Mammary epithelial cell (primary cell): ENCODE measurements at regions of chr14 and their contacts with region 1.

Region 1: GRCh38 chr14:93332853-93333630 is at the start of gene BTBD7:
- DNase-seq: peak; percentile 94
- H3K4me3 ChIP-seq: peak within 1 kb of the TSS; percentile 77 to 80 (median 78)
- H3K27ac ChIP-seq: peak within 1 kb of the TSS; percentile 91
- H3K4me1 ChIP-seq: peaks cover 15% of the 10 kb centered on the region
- H3K27me3 ChIP-seq: no peaks in the 10 kb centered on the region
- CTCF ChIP-seq: peak; percentile 15 to 31
- total RNA-seq, gene BTBD7: 41.0 to 56.6 TPM

Region 2: DNA sequence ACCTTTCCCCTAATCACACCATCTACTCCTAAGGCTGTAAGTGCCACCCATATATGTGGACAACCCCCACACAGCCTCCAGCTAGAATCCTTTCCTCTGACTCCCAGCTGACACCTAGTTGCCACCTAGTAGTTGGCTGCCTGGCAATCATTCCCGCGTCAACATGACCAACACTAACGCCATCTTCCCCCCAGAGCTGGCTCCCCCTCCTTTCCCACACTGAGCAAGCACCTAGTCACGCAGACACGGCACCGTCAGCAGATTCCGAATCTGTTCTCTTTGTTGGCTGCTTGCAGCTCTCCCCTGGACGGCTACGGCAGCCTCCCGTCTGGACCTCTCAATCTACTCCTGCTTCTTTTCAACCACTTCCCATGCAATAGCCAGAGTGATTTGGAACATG is 98.2 kb before region 1 on chr14:
- CTCF ChIA-PET with region 1: no interaction called
- dilution Hi-C with region 1: no loop called
- in situ Hi-C with region 1: no loop called
- intact Hi-C with region 1: loop called (anchors 2 kb)
- DNase-seq: peak; percentile 79
- H3K4me3 ChIP-seq: no peak overlapping the region
- H3K27ac ChIP-seq: no peak overlapping the region
- H3K4me1 ChIP-seq: peaks cover 4% of the 10 kb centered on the region
- H3K27me3 ChIP-seq: no peaks in the 10 kb centered on the region
- CTCF ChIP-seq: no peak

Region 3: GRCh38 chr14:93263416-93263815 is 69.6 kb before region 1 on chr14:
- CTCF ChIA-PET with region 1: no interaction called
- dilution Hi-C with region 1: no loop called
- in situ Hi-C with region 1: no loop called
- intact Hi-C with region 1: loop called (anchors 2 kb)
- DNase-seq: peak; percentile 31
- H3K4me3 ChIP-seq: no peak overlapping the region
- H3K27ac ChIP-seq: no peak overlapping the region
- H3K4me1 ChIP-seq: peaks cover 11% of the 10 kb centered on the region
- H3K27me3 ChIP-seq: no peaks in the 10 kb centered on the region
- CTCF ChIP-seq: no peak

Region 4: DNA sequence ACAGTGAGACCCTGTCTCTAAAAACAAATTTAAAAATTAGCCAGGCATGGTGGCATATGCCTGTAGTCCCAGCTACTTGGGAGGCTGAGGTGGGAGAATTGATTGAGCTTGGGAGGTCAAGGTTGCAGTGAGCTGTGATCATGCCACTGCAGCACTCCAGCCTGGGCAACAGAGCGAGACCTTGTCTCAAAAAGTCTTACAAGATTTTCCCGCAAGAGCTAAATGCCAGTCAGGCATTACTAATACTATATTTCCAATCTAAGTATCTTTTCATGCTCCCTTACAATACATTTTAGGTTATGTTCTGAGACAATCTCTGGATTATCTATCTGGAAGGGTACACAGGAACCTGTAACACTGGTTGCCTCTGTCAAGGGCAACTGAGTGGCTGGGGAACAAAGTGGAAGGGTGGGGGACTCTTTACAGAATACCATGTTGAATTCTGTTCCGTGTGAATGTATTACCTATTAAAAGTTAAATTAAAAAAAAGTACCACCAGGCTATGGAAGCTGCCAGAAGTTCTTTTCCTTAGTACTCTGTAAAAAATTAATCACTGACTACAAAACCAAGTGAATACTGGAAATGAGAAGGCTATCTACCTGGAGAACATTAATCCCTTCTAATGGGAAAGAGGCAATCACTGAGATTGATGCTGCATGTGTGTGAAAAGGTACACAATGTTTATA is 56.9 kb before region 1 on chr14:
- CTCF ChIA-PET with region 1: no interaction called
- dilution Hi-C with region 1: no loop called
- in situ Hi-C with region 1: no loop called
- intact Hi-C with region 1: loop called (anchors 5 kb)
- DNase-seq: no peak
- H3K4me3 ChIP-seq: no peak overlapping the region
- H3K27ac ChIP-seq: no peak overlapping the region
- H3K4me1 ChIP-seq: peaks cover 10% of the 10 kb centered on the region
- H3K27me3 ChIP-seq: no peaks in the 10 kb centered on the region
- CTCF ChIP-seq: no peak

Region 5: DNA sequence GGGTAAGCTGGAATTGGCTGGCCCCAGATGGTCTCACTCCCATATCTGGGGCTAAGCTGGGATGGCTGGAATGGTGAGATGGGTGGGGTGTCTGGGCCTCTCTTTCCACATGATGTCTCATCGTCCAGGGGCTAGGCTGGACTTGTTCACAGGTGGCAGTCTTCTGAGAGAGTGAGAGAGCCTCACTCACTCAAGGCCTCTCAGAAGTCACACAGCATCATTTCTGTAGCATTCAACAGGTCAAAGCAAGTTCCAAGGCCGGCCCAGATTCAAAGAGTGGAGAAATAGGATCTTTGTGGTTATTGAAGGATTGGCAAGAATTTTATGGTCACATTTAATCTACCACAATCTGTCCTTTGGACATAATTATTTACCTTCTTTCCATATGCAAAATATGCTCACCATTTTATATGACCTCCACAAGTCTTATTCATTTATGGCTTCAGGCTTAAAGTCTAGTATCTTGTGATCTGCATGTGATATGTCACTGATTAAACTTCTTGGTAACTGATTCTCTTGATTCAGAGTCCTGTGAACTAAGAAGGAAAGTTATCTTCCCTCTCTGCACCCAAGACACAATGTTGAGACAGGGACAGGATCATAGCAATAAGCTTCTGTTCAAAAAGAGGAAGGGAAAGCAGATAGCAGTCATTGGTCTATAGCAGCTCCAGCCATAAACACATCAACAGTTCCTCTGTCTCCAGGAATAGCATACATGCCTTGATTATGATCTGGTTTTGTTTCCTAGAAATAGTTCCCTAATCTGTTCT is 200.6 kb after region 1 on chr14:
- CTCF ChIA-PET with region 1: interaction called, 6 read pairs
- dilution Hi-C with region 1: no loop called
- in situ Hi-C with region 1: no loop called
- intact Hi-C with region 1: loop called (anchors 1 kb)
- DNase-seq: peak; percentile 99
- H3K4me3 ChIP-seq: no peak overlapping the region
- H3K27ac ChIP-seq: peak overlapping the region; percentile 61
- H3K4me1 ChIP-seq: peaks cover 38% of the 10 kb centered on the region
- H3K27me3 ChIP-seq: no peaks in the 10 kb centered on the region
- CTCF ChIP-seq: no peak